ENCODE measurements at regions of chr15 and their contacts with region 1.

Region 1: GRCh38 chr15:73908030-73908821 is 18.0 kb upstream of the LOXL1 start:
- DNase-seq: peak; percentile 71 to 90 (median 84)
- H3K4me3 ChIP-seq: no peak overlapping the region
- H3K27ac ChIP-seq: no peak overlapping the region
- H3K27me3 ChIP-seq: peaks cover 0 to 7% (median 0%) of the 10 kb centered on the region in 45 donors
- CTCF ChIP-seq: peak; percentile 49 to 95 (median 86)

Region 2: DNA sequence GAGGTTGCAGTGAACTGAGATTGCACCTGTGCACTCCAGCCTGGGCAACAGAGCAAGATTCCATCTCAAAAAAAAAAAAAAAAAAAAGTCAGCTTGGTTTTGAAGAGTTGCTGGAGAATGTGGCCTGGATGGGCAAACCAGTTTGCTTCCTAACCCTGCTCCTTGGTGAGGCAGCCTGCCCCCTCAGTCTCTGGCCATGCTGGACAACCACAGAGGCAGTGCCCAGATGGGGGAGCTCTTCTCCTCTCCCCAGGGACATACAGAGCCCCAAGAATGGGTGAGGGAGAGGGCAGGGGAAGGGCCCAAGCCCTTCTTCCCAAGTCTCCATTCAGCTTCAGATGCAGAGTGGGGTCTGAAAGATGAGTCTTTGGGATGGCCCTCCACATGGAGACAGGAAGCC is 196.1 kb before region 1 on chr15:
- intact Hi-C with region 1: loop called in 1 of 2 experiments (anchors 5 kb)
- DNase-seq: peak in 2 of 10 donors; percentile 43 to 45
- H3K4me3 ChIP-seq: no peak overlapping the region
- H3K27ac ChIP-seq: no peak overlapping the region
- H3K27me3 ChIP-seq: no peaks in the 10 kb centered on the region
- CTCF ChIP-seq: peak in 31 of 56 donors; percentile 9 to 53 (median 23)

Region 3: DNA sequence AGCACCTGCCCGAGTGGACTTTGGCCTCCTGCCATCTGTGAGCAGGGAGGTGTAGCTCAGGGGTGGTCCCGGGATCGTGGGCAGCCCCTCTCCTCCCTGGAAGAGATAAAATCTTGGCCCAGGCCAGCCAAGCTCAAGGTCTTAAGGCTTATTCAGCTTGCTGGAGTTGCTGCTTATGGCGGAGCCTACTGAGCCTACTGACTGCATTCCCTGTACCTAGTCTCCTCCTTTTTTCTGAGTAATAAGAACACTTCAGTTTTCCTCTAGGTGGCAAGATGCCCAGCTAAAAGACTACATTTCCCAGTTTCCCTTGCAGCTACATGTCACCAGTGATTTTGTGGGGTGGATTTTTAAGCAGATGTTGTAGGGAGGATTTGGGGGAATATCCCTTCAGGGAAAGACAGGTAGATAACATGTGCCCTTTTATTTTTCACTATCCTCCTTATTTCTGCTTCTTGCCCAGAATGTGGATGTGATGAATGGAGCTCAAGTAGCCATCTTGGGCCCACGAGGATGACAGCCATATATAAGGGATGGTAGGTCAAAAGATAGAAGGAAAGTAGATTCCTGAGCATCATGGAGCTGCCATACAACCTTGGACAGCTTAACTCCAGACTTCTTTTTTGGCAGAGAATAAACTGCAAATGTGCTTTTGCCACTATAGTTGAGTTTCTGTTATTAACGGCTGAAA is 113.6 kb before region 1 on chr15:
- intact Hi-C with region 1: loop called in 1 of 2 experiments (anchors 10 kb)
- DNase-seq: no peak
- H3K4me3 ChIP-seq: no peak overlapping the region
- H3K27ac ChIP-seq: no peak overlapping the region
- H3K27me3 ChIP-seq: peaks cover 0 to 4% (median 0%) of the 10 kb centered on the region in 45 donors
- CTCF ChIP-seq: no peak